ENCODE measurements at regions of chr6 and their contacts with region 1.

Region 1: DNA sequence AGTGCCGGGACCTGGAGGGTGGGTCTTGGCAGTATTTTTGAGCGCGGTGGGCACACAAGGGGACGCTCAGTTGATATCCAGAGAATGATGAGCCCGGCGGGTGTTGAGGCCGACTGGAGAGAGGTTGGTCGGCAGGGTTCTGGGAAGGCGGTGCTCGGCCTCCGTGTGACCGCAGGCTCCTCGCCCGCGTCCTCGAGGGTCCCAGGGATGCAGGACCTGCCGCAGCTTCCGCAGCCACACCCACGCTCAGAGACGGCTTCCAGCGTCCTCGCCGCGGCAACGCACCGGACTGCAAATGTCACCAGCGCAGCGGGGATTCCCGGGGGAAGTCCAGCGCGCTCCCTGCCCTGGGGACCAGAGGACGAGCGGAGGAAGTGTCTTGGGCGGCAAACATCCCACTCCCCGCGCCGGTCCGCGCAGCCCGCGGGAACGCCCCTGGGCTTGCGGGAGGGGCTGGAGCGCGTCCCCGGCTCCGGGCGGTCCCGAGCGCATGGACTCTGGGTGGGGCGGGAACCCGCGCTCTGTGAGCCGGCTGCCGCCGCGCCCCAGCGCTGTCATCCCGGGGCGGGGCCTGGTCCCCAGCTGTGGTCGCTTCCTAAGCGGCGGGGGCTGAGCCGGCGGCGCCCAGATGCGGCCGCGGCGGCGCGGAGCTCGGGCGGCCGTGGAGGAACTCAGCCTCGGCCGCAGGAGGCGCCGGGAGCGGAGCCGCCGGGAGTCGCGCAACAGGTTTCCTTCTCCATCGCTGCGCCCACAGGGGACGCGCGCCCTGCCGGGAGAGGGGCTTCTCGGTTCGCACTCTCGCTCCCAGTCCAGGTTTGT is at the start of gene STX11:
- DNase-seq: peak; percentile 28
- H3K4me3 ChIP-seq: peak within 1 kb of the TSS; percentile 64
- H3K27ac ChIP-seq: no peak within 1 kb of the TSS
- H3K4me1 ChIP-seq: no peaks in the 10 kb centered on the region
- CTCF ChIP-seq: no peak
- total RNA-seq, gene STX11: 0.16 and 0.21 TPM in 2 replicates

Region 2: GRCh38 chr6:144110210-144110609 is 39.9 kb before region 1 on chr6:
- CTCF ChIA-PET with region 1: no interaction called
- POLR2A ChIA-PET with region 1: no interaction called
- intact Hi-C with region 1: loop called (anchors 5 kb)
- DNase-seq: no peak
- H3K4me3 ChIP-seq: no peak overlapping the region
- H3K27ac ChIP-seq: no peak overlapping the region
- H3K4me1 ChIP-seq: no peaks in the 10 kb centered on the region
- CTCF ChIP-seq: no peak

Region 3: DNA sequence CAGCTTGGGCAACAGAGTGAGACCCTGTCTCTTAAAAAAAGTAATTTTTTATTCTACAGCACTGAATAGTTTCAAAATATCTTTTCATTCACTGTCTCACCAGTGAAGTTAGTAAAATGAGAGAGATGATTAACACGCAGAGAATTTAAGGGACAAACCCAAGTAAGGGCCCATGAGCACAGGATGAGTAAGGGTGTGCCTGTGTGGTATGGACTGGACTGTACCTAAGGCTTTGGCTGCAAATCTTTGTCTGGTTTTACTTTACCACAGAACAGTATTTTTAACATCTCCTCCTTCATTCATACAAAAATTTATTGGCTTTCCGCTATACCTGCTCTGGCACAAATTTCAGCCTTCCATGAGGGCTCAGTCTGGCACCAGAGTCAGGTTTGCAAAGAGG is 568.3 kb after region 1 on chr6:
- CTCF ChIA-PET with region 1: no interaction called
- POLR2A ChIA-PET with region 1: no interaction called
- intact Hi-C with region 1: no loop called
- DNase-seq: no peak
- H3K4me3 ChIP-seq: no peak overlapping the region
- H3K27ac ChIP-seq: no peak overlapping the region
- H3K4me1 ChIP-seq: no peaks in the 10 kb centered on the region
- CTCF ChIP-seq: no peak